Breast epithelium (tissue), 4 donors: ENCODE measurements at regions of chr2 and their contacts with region 1.

Region 1: DNA sequence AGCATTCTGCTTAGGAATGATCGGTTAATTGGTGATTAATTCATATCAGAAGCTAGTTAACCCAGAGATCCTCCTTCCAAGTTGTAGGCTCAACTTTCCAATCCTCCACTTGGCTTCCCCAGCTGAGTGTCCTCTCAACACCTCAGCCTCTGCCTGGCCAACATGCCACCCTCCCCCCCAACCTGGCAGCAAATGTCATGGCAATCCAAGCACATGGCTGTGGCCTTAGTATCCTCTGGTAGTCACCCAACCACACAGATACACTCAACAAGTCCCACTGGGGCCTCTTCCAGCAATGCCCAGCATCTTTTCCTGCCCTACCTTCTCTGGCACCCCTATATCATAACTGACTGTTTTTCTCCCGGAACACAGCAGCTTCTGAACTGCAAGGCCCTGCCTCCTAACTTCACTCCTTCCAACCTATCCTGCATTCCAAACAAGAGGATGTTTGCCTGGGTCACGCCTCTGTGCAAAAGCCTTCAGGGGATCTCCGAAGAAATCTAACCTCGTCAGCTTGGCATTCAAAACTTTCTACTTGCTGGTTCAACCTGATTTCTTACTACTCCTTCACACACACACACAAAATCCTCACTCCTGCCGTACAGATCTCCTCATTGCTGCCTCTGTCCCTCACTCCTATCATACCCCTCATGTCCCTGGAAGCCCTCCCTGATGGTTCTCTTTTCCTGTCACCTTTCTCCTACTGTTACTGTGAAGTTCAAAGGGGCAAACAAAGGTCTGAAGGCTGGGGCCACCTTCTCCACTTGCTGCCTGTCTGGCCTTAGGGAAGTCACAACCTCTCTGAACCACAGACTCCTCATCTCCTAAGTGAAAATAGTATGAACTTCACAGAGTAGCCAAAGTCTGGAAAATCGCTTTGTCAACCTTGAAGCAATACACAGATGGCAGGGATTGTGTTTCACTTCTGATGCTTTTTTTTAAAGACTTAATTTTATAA is 194.8 kb downstream of the CYP26B1 start:
- DNase-seq: peak in 1 of 2 donors; percentile 47
- H3K4me3 ChIP-seq: no peak overlapping the region
- H3K27ac ChIP-seq: peak overlapping the region; percentile 72 to 78
- H3K4me1 ChIP-seq: peaks cover 0 to 5% of the 10 kb centered on the region in 2 donors
- H3K27me3 ChIP-seq: no peaks in the 10 kb centered on the region
- CTCF ChIP-seq: no peak
- POLR2A ChIP-seq: no peak

Region 2: GRCh38 chr2:71933467-71934319 is 19.2 kb before region 1 on chr2:
- intact Hi-C with region 1: loop called (anchors 1 kb)
- DNase-seq: no peak
- H3K4me3 ChIP-seq: no peak overlapping the region
- H3K27ac ChIP-seq: no peak overlapping the region
- H3K4me1 ChIP-seq: no peaks in the 10 kb centered on the region
- H3K27me3 ChIP-seq: no peaks in the 10 kb centered on the region
- CTCF ChIP-seq: no peak
- POLR2A ChIP-seq: no peak

Region 3: GRCh38 chr2:72165792-72166191 is 212.9 kb after region 1 on chr2:
- intact Hi-C with region 1: no loop called
- DNase-seq: no peak
- H3K4me3 ChIP-seq: no peak overlapping the region
- H3K27ac ChIP-seq: no peak overlapping the region
- H3K4me1 ChIP-seq: no peaks in the 10 kb centered on the region
- H3K27me3 ChIP-seq: no peaks in the 10 kb centered on the region
- CTCF ChIP-seq: no peak
- POLR2A ChIP-seq: no peak

Region 4: DNA sequence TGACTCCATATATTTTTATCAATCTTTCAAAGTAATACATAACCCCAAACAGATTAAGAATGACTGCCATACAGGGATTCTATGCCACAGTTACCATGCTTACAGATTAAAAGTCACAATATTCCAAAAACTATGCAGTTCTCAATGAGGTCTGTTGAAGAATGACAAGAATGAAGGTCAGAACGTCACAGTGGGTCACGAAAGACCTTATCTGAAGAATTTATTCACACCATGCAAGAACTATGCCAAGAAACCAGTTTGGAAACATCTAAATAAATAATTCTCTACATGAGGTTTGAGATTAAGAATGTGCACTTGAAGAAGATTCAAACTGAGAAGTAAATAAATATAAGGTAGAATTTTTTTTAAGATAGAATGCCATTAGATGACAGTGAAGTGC is 619.6 kb after region 1 on chr2:
- intact Hi-C with region 1: no loop called
- DNase-seq: no peak
- H3K4me3 ChIP-seq: no peak overlapping the region
- H3K27ac ChIP-seq: no peak overlapping the region
- H3K4me1 ChIP-seq: no peaks in the 10 kb centered on the region
- H3K27me3 ChIP-seq: no peaks in the 10 kb centered on the region
- CTCF ChIP-seq: no peak
- POLR2A ChIP-seq: no peak

Region 5: GRCh38 chr2:73373344-73373743 is 1420.5 kb after region 1 on chr2:
- intact Hi-C with region 1: no loop called
- DNase-seq: no peak
- H3K4me3 ChIP-seq: no peak overlapping the region
- H3K27ac ChIP-seq: no peak overlapping the region
- H3K4me1 ChIP-seq: no peaks in the 10 kb centered on the region
- H3K27me3 ChIP-seq: peaks cover 0 to 6% of the 10 kb centered on the region in 2 donors
- CTCF ChIP-seq: no peak
- POLR2A ChIP-seq: no peak